ENCODE measurements at regions of chr1 and their contacts with region 1.

Region 1: GRCh38 chr1:178434360-178434759 is 62.4 kb downstream of the CLEC20A start:
- DNase-seq: no peak
- ATAC-seq: no peak
- H3K4me3 ChIP-seq: no peak overlapping the region
- H3K27ac ChIP-seq: no peak overlapping the region
- H3K4me1 ChIP-seq: no peaks in the 10 kb centered on the region
- H3K27me3 ChIP-seq: no peaks in the 10 kb centered on the region
- CTCF ChIP-seq: no peak

Region 2: GRCh38 chr1:178004926-178005391 is 429.4 kb before region 1 on chr1:
- intact Hi-C with region 1: loop called in 1 of 2 experiments (anchors 5 kb)
- DNase-seq: no peak
- ATAC-seq: no peak
- H3K4me3 ChIP-seq: no peak overlapping the region
- H3K27ac ChIP-seq: no peak overlapping the region
- H3K4me1 ChIP-seq: peaks cover 2% of the 10 kb centered on the region
- H3K27me3 ChIP-seq: no peaks in the 10 kb centered on the region
- CTCF ChIP-seq: no peak

Region 3: GRCh38 chr1:178300352-178300699 is 134.0 kb before region 1 on chr1:
- intact Hi-C with region 1: no loop called
- DNase-seq: no peak
- ATAC-seq: no peak
- H3K4me3 ChIP-seq: no peak overlapping the region
- H3K27ac ChIP-seq: no peak overlapping the region
- H3K4me1 ChIP-seq: peaks cover 4% of the 10 kb centered on the region
- H3K27me3 ChIP-seq: no peaks in the 10 kb centered on the region
- CTCF ChIP-seq: no peak

Region 4: DNA sequence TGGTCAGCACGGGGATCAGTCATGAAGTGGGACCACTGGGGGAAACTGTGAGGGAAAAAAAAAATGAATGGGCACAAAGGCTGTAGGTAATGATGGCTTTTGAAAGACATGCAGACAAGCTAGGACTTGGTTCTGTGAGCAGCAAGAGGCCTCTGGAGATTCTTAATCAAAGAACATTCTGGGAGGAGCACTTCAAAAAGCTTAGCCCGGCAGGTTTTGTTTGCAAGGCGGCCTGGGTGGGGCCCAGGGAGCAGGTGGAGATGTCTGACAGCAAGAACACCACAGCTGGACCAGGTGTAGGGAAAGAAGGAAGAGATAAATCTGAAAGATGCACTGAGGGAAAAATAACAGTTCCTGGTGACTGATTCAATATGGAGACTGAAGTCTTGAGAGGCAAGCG is 84.5 kb after region 1 on chr1:
- intact Hi-C with region 1: no loop called
- DNase-seq: no peak
- ATAC-seq: no peak
- H3K4me3 ChIP-seq: no peak overlapping the region
- H3K27ac ChIP-seq: no peak overlapping the region
- H3K4me1 ChIP-seq: no peaks in the 10 kb centered on the region
- H3K27me3 ChIP-seq: no peaks in the 10 kb centered on the region
- CTCF ChIP-seq: no peak

Region 5: DNA sequence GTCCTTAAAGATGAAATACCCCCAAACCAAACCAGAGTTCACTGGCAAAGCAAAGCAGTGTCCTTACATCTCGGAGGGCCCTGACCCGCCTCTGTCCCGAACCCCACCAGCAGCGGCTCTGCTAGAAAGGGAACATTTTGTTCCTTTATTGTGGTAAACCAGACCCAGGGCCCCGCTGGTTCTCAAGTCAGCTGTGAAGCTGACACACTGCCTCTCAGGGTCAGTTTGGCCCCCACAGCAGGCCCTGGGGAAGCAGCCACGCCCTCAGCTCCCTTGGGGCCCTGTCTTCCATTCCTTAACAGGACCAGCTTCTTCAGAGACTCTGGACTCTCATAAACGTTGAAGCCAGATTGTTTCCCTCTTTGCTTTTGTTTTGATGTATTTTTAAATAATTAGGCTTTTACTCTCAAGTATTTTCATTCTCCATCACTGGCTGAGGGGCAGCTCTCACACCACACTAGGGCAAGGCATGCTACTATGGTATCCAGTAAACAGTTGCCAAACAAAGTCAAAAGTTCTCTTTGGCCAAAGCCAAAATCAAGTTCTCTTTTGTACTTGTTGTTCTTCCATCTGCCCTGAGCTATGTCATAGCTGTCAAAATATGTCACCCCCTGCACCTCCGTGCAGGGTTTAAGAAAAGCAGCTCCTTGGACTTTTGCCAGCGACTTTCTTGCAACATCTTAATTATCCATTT is 497.6 kb after region 1 on chr1:
- intact Hi-C with region 1: no loop called
- DNase-seq: peak; percentile 75 to 91
- ATAC-seq: peak; percentile 19 to 85 (median 74)
- H3K4me3 ChIP-seq: no peak overlapping the region
- H3K27ac ChIP-seq: peak overlapping the region; percentile 16
- H3K4me1 ChIP-seq: peaks cover 7% of the 10 kb centered on the region
- H3K27me3 ChIP-seq: no peaks in the 10 kb centered on the region
- CTCF ChIP-seq: no peak